WTC11 (cell line): ENCODE measurements at regions of chr19 and their contacts with region 1.

Region 1: DNA sequence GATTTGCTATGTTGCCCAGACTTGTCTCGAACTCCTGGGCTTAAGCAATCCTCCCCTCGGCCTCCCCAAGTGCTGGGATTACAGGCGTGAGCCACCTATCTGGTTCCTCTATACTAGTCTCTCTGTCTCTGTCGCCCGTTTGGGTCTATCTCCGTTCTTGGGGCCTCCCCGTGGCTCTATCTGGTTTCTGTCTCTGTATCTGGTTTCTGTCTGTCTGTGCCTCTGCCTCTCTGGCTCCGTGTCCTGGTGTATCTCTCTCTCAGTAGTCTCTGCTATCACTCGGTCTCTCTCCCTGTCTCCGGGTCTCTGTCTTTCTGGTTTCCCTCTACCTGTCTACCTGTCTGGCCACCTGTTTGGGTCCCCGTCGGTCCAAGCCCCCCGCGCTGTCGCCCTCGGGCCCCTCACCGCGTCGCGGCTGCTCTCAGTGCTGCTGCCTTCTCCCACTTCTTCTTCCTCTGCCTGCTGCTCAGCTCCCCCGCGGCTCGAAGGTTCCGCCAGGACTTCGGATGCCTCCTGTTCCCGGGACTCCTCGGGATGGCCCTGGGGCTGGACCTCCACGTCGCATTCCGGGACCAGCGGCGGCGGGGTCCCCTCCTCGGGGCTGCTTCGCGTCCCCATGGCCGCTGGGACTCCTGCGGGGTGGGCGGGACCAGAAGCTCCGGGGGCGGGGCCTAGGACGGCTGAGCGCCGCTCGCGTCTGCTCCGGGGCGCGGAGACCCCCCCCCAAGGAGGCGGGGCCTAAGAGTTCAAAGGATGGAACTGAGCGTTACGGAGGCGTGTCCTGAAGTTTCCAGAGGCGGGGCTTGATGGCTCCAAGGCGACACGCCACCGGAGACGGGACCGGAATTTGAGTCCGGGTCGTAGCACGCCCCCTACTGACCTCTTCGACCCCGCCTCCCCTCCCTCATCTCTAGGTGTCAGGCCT is 783 bp downstream of the PHLDB3 start:
- DNase-seq: peak; percentile 97
- ATAC-seq: peak; percentile 89
- H3K4me3 Mint-ChIP-seq: peak overlapping the region; percentile 91
- H3K27ac Mint-ChIP-seq: peak overlapping the region; percentile 74
- H3K4me1 Mint-ChIP-seq: peaks cover 21% of the 10 kb centered on the region
- H3K27me3 Mint-ChIP-seq: peaks cover 38% of the 10 kb centered on the region
- CTCF ChIP-seq: peak; percentile 25; the same call in 1 of the 2 replicates

Region 2: GRCh38 chr19:43463381-43464136 is 40.2 kb before region 1 on chr19:
- CTCF ChIA-PET with region 1: interaction called, 29 read pairs
- POLR2A ChIA-PET with region 1: interaction called, 11 read pairs
- DNase-seq: peak; percentile 99
- ATAC-seq: peak; percentile 89
- H3K4me3 Mint-ChIP-seq: peak overlapping the region; percentile 91
- H3K27ac Mint-ChIP-seq: peak overlapping the region; percentile 99
- H3K4me1 Mint-ChIP-seq: peaks cover 14% of the 10 kb centered on the region
- H3K27me3 Mint-ChIP-seq: peaks cover 71% of the 10 kb centered on the region
- CTCF ChIP-seq: no peak

Region 3: DNA sequence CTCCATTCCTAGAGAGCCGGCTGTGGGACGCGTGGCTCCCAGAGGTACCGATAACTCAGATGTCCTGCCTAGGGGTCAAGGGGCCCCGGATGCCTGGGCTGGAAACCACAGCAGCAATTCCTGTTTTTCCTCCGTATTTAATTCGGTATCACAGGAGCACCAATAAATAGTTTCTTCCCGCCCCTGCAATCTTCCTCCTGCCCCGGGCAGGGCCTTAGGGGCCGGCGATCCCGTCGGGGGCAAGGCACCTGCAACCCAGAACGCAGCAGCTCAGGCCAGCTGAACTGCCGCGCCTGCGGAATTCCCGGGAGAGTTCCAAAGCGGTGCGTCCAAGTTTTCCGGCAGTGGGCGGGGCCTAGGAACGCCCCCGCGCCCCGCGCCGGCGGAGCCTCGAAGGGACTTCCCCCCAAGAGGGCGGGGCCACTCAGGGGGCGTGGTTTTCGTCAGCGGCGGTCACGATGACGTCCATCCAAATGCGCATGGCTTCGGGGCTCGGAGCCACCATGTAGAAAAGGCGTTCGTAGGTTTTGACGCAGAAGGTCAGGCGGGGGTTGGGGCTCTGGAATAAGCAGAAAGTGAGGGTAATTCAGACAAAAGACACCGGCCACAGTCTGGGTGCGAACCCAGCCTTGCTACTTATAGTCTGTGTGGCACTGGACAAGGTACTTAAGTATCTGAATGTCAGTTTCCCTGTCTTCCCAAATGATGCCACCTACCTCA is 28.6 kb before region 1 on chr19:
- CTCF ChIA-PET with region 1: interaction called, 14 read pairs
- POLR2A ChIA-PET with region 1: interaction called, 4 read pairs
- DNase-seq: peak; percentile 99
- ATAC-seq: peak; percentile 95
- H3K4me3 Mint-ChIP-seq: peak overlapping the region; percentile 68
- H3K27ac Mint-ChIP-seq: peak overlapping the region; percentile 89
- H3K4me1 Mint-ChIP-seq: peaks cover 3% of the 10 kb centered on the region; the same call in 1 of the 2 replicates
- H3K27me3 Mint-ChIP-seq: peaks cover 43% of the 10 kb centered on the region
- CTCF ChIP-seq: no peak